Activated CD4-positive, alpha-beta memory T cell treated with anti-CD3 and anti-CD28 coated beads, Interleukin-2, amount 10 ng/mL, durations not matched to agents 7 days and 5 days (primary cell): ENCODE measurements at regions of chr11 and their contacts with region 1.

Region 1: DNA sequence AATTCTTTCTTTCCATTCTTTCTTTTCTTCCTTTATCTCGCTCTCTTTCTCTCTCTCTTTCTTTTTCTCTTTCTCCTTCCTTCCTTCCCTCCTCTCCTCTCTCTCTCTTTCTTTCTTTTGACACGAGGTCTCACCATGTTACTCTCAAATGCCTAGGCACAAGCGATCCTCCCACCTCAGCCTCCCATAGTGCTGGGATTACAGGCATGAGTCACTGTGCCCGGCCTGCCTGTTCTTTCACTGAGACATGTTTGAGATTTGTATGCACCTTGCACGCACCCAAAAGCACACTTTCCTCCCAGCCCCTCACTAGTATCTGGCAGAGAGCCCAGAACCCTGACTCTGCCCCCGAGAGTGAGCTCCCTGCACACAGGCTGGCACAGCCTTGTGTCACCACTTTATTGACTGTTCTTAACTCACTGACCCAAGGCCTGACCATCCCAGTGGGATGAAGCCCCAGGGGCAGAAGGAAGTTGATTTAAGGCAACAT is 56.8 kb downstream of the CD6 start:
- DNase-seq: peak; percentile 62
- H3K4me3 Mint-ChIP-seq: peak overlapping the region; percentile 72
- H3K27ac Mint-ChIP-seq: peak overlapping the region; percentile 86
- H3K4me1 Mint-ChIP-seq: peaks cover 88% of the 10 kb centered on the region
- H3K27me3 Mint-ChIP-seq: no peaks in the 10 kb centered on the region

Region 2: DNA sequence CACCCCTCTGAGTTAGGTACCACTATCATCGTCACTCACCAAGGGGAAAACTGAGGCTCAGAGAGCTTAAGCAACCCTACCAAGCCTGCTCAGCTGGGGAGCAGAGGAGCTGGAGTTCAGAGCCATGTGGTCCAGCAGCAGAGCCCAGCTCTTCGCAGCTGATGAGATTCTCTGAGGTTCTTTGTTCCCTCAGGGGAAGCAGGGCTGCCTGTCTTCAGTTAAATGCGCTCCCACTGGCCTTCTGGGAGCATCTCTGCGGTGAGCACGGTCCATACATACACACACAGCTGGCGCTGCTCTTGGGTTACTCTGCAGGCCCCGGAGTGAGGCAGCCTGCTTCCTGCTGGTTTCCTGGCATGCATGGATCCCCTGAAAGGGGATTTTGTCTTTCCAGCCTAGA is 167.4 kb before region 1 on chr11:
- CTCF ChIA-PET with region 1: no interaction called
- POLR2A ChIA-PET with region 1: no interaction called
- DNase-seq: no peak
- H3K4me3 Mint-ChIP-seq: no peak overlapping the region
- H3K27ac Mint-ChIP-seq: no peak overlapping the region
- H3K4me1 Mint-ChIP-seq: peaks cover 45% of the 10 kb centered on the region
- H3K27me3 Mint-ChIP-seq: peaks cover 6% of the 10 kb centered on the region

Region 3: DNA sequence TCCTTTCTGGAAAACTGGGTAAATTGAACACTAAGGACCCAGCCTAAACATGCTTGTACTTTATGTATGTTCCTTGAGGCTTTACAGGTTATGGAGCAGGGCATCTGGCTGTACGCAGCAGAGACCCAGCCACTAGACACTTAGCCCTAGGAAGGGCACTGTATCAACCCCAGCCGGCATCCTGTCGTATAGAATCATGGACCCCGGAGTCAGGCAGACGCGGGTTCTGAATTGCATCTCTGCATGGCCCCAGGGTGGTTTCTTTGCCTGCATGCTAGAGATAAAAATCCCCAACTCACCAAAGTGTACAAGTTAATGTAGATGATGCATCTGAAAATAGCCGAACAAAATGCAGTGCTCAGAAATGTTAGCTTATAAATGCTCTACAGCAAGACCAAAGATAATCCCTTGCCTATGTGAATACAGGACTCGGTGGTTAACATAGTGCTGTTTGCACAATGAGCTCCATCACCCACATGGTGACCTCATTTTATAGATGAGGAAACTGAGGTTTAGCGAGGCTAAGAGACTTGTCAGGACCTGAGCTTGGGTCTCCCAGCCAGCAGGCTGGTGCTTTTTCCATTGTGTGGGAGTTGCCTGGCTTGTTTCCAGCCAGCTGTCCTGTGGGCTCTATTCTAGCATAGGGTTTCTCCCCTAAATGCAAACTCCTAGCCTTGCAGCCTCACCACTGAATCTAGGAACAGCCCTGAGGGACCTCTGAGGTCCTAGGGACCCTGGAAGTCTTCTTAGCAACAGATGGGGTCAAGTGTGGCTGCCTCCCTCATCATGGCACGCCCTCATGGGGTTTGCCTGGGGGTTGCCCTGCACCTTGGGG is 49.6 kb before region 1 on chr11:
- CTCF ChIA-PET with region 1: no interaction called
- POLR2A ChIA-PET with region 1: interaction called, 15 read pairs
- DNase-seq: peak; percentile 60
- H3K4me3 Mint-ChIP-seq: peak overlapping the region; percentile 69
- H3K27ac Mint-ChIP-seq: peak overlapping the region; percentile 99
- H3K4me1 Mint-ChIP-seq: peaks cover 84% of the 10 kb centered on the region
- H3K27me3 Mint-ChIP-seq: no peaks in the 10 kb centered on the region

Region 4: GRCh38 chr11:61004180-61004611 is 24.1 kb before region 1 on chr11:
- CTCF ChIA-PET with region 1: interaction called, 3 read pairs
- POLR2A ChIA-PET with region 1: interaction called, 13 read pairs
- DNase-seq: peak; percentile 43
- H3K4me3 Mint-ChIP-seq: peak overlapping the region; percentile 53
- H3K27ac Mint-ChIP-seq: peak overlapping the region; percentile 83
- H3K4me1 Mint-ChIP-seq: peaks cover 77% of the 10 kb centered on the region
- H3K27me3 Mint-ChIP-seq: no peaks in the 10 kb centered on the region

Region 5: GRCh38 chr11:61049859-61050258 is 21.5 kb after region 1 on chr11:
- CTCF ChIA-PET with region 1: no interaction called
- POLR2A ChIA-PET with region 1: interaction called, 265 read pairs
- DNase-seq: no peak
- H3K4me3 Mint-ChIP-seq: no peak overlapping the region
- H3K27ac Mint-ChIP-seq: peak overlapping the region; percentile 65
- H3K4me1 Mint-ChIP-seq: peaks cover 77% of the 10 kb centered on the region
- H3K27me3 Mint-ChIP-seq: no peaks in the 10 kb centered on the region

Region 6: DNA sequence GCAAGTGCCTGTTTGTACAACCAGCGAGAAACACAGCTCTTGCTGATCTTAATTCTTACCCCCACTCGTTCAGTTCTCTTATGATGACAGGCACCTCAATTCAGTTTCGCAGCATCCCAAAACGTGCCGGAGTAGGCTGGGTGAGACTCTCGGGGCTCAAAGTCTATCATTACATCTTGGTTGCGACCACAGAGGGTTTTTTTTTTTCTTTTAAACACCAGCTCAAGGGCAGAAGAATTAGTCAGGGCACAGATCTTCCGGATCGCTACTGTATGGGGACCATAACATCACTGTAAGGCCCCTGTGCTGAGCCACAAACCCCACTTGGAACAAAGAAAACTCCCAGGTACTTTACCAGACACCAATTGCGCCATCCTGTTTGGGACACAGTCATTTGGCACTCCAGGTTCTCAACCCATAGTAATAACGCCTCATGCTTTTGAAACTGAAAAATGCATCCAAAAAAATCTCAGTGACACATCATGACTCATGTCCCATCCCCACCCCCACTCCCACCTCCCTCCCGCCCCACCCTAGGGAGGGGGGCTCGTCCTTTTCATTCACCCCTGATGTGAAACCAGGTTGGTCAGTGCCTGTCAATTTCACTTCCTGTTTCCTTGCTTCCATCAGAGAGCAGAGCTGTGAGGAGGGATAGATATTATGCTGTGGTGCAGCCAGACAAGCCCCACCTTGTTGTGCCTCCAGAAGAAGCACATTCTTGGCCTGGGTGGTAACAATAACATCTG is 32.9 kb after region 1 on chr11:
- CTCF ChIA-PET with region 1: interaction called, 5 read pairs
- POLR2A ChIA-PET with region 1: interaction called, 18 read pairs
- DNase-seq: peak; percentile 87
- H3K4me3 Mint-ChIP-seq: peak overlapping the region; percentile 65
- H3K27ac Mint-ChIP-seq: peak overlapping the region; percentile 96
- H3K4me1 Mint-ChIP-seq: peaks cover 87% of the 10 kb centered on the region
- H3K27me3 Mint-ChIP-seq: no peaks in the 10 kb centered on the region

Region 7: DNA sequence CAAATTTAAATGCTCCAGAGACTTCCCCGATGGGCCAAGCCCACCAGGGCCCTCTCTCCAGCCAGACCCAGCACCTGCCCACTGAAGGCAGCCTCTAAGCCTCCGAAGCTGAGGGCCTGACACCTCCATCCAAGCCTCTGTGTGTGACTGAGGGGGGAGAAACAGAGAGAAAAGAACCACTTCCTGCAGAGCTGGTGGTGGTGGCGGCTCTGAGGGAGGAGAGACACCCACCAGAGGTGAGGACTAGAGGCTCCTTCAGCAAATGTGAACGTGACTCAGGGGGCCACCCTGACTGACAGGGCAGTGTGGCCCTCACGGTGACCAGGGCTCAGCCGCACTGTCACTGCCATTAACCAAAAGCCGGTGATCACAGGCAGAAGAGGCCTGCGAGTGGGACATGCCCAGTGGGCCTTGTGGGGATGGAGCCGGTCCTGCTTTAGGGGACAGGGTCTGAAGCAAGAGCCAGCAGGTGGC is 42.9 kb after region 1 on chr11:
- CTCF ChIA-PET with region 1: no interaction called
- POLR2A ChIA-PET with region 1: interaction called, 18 read pairs
- DNase-seq: peak; percentile 83
- H3K4me3 Mint-ChIP-seq: peak overlapping the region; percentile 40
- H3K27ac Mint-ChIP-seq: peak overlapping the region; percentile 93
- H3K4me1 Mint-ChIP-seq: peaks cover 91% of the 10 kb centered on the region
- H3K27me3 Mint-ChIP-seq: no peaks in the 10 kb centered on the region

Region 8: DNA sequence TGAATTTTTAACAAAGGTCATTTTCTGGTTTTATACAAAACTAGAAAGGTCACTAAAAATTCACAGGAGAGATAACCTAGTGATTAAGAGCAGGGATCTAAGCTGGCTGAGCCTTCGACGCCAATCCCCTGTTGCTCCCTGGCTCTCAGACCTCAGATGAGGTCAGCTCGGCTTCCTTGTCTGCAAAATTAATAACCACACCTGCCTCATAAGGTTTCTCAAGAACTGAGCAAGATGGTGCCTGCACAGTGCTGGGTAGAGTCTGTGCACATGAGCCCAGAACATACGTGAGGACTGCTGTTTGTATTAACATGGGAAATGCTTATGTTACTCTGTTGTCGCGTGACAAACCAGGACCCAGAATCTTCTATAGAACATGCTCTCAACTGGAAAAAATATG is 49.6 kb after region 1 on chr11:
- CTCF ChIA-PET with region 1: interaction called, 8 read pairs
- POLR2A ChIA-PET with region 1: interaction called, 58 read pairs
- DNase-seq: peak; percentile 50
- H3K4me3 Mint-ChIP-seq: peak overlapping the region; percentile 82
- H3K27ac Mint-ChIP-seq: peak overlapping the region; percentile 96
- H3K4me1 Mint-ChIP-seq: peaks cover 92% of the 10 kb centered on the region
- H3K27me3 Mint-ChIP-seq: no peaks in the 10 kb centered on the region

Region 9: GRCh38 chr11:61141601-61142028 is 113.3 kb after region 1 on chr11:
- CTCF ChIA-PET with region 1: no interaction called
- POLR2A ChIA-PET with region 1: no interaction called
- DNase-seq: no peak
- H3K4me3 Mint-ChIP-seq: no peak overlapping the region
- H3K27ac Mint-ChIP-seq: no peak overlapping the region
- H3K4me1 Mint-ChIP-seq: no peaks in the 10 kb centered on the region
- H3K27me3 Mint-ChIP-seq: no peaks in the 10 kb centered on the region

Region 10: DNA sequence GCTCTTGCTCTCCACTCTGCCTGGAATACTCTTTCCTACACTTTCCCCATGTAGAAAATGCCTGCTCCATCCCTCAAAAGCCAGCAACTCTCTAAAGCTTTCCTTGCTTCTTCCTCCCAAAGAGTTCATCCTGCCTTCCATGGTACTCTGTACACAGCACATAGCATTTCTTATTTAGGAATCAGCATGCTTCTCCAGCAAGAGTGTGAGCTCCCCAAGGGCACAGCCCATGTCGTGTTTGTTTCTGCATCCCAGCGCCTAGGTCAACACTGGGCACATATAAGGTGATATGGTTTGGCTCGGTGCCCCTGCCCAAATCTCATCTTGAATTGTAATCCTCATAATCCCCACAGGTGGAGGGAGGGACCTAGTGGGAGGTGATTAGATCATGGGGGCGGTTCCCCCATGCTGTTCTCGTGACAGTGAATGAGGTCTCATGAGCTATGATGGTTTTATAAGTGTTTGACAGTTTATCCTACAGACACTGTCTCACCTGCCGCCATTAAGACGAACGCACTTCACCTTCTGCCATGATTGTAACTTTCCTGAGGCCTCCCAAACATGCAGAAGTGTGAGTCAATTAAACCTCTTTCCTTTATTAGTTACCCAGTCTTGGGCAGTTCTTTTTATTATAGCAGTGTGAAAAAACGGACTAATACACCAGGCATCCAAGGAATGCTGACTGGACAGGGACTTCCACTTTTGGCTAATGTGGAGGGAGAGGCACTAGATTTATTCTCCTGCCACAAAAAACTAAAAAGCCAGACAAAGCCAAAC is 124.7 kb after region 1 on chr11:
- CTCF ChIA-PET with region 1: no interaction called
- POLR2A ChIA-PET with region 1: no interaction called
- DNase-seq: no peak
- H3K4me3 Mint-ChIP-seq: no peak overlapping the region
- H3K27ac Mint-ChIP-seq: no peak overlapping the region
- H3K4me1 Mint-ChIP-seq: peaks cover 3% of the 10 kb centered on the region
- H3K27me3 Mint-ChIP-seq: no peaks in the 10 kb centered on the region

Region 11: GRCh38 chr11:61163714-61164605 is 135.6 kb after region 1 on chr11:
- CTCF ChIA-PET with region 1: no interaction called
- POLR2A ChIA-PET with region 1: no interaction called
- DNase-seq: no peak
- H3K4me3 Mint-ChIP-seq: no peak overlapping the region
- H3K27ac Mint-ChIP-seq: no peak overlapping the region
- H3K4me1 Mint-ChIP-seq: peaks cover 55% of the 10 kb centered on the region
- H3K27me3 Mint-ChIP-seq: no peaks in the 10 kb centered on the region